Activated CD4-positive, alpha-beta T cell treated with anti-CD3 and anti-CD28 coated beads, Interleukin-2, amount 10 ng/mL, durations not matched to agents 24 days and 14 days (primary cell): ENCODE measurements at regions of chr3 and their contacts with region 1.

Region 1: DNA sequence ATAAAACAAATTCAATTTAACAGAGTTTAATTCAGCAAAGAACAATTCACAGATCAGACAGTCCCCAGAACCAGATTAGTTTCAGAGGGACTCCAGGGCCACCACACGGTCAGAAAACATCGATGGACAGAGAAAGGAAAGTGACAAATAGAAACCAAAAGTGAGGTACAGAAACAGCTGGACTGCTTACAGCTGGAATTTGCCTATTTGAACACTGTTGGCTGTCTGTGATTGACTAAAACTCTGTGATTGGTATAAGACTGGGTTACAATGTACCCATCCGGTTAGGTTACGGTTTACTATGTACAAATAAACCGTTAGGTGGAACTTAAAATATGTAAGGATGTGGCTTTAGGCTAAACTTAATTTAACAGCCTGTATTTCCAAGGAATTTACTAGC is 30.3 kb downstream of the MOBP start:
- DNase-seq: no peak
- H3K4me3 Mint-ChIP-seq: no peak overlapping the region
- H3K27ac Mint-ChIP-seq: no peak overlapping the region
- H3K4me1 Mint-ChIP-seq: peaks cover 3% of the 10 kb centered on the region
- H3K27me3 Mint-ChIP-seq: peaks cover 40% of the 10 kb centered on the region

Region 2: DNA sequence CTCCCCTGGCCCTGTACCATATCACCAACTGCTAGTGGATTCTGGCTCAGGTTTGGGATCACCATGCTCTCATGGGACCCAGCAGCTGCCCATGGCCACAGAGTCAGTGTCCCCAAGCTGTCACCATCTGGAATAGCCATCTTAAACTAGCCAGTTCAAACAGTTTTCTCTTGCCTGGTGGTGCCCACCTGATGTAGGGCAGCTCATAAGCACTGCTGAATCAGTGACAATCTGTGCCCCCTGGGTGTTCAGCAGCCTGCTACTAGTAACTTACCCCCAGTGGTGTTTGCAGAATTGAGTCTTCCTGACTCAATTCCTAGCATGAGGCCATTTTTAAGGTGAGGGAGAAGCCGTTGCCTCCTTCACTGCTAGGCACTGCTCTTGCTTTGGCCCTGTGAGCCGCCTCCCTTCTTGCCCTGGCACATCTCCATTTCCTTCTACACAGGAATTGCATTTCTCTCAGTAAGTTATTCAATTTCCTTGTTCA is 83.3 kb before region 1 on chr3:
- intact Hi-C with region 1: loop called (anchors 1 kb)
- DNase-seq: no peak
- H3K4me3 Mint-ChIP-seq: no peak overlapping the region
- H3K27ac Mint-ChIP-seq: peak overlapping the region; percentile 80
- H3K4me1 Mint-ChIP-seq: peaks cover 28% of the 10 kb centered on the region
- H3K27me3 Mint-ChIP-seq: peaks cover 3% of the 10 kb centered on the region

Region 3: GRCh38 chr3:39447637-39448483 is 49.9 kb before region 1 on chr3:
- intact Hi-C with region 1: loop called (anchors 1 kb)
- DNase-seq: peak; percentile 88
- H3K4me3 Mint-ChIP-seq: no peak overlapping the region
- H3K27ac Mint-ChIP-seq: no peak overlapping the region
- H3K4me1 Mint-ChIP-seq: no peaks in the 10 kb centered on the region
- H3K27me3 Mint-ChIP-seq: peaks cover 17% of the 10 kb centered on the region

Region 4: DNA sequence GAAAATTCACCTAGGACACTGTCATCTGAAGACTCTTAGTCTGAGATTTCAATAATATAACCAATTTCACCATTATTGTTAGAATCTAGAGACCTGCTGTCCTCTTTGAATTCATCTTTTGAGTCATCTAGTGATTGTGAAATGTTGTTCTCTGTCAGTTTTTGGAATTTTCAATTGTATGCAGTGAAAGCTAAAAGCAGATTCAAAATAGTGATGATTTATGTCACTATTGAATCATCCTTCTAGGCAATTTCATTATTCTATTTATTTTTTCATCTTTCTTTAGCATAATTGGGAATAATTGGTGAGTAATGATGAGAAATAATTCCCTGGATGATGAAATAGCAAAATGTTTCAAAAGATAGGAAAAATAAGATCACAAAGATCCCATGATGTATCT is 710.0 kb after region 1 on chr3:
- intact Hi-C with region 1: no loop called
- DNase-seq: no peak
- H3K4me3 Mint-ChIP-seq: no peak overlapping the region
- H3K27ac Mint-ChIP-seq: no peak overlapping the region
- H3K4me1 Mint-ChIP-seq: no peaks in the 10 kb centered on the region
- H3K27me3 Mint-ChIP-seq: no peaks in the 10 kb centered on the region